Heart right ventricle (tissue), 16 donors: ENCODE measurements at regions of chr3 and their contacts with region 1.

Region 1: DNA sequence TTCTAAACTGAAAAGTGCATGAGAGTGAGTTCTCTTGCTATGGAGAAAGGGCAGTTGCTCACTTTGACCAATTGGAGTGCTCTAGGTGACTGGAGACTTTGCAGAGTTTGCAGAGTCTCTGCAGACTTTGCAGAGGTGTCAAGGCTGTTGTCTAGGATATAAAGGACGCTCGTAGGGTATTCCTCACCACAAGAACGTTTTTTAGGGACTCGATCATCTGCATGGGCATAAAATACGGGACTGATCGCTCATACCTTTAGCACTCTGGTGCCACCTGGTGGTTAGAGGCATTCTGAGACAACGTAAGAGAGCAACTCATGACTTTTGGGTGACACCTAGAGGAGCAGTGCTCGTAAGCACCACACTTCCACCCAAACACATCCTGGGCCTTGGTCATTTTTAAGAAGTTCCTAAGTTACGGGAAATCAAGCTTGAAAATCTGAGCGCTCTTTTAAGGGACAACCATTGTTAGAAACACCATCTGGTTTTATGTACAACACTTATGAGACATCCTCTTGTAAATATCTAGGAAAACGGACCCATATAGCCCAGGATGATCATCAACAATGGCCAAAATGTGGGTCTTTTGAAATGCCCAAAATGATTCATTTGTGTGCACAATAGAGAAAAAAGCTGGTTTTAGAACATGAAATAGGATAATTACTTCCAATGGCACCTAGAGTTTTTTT is 51.6 kb upstream of the XCR1 start:
- DNase-seq: peak; percentile 42 to 90
- ATAC-seq: peak; percentile 93 to 97 (median 95)
- H3K4me3 ChIP-seq: peak overlapping the region in 3 of 10 donors; percentile 23 to 28 (median 27)
- H3K27ac ChIP-seq: no peak overlapping the region
- H3K4me1 ChIP-seq: peaks cover 0 to 12% (median 0%) of the 10 kb centered on the region in 9 donors
- H3K27me3 ChIP-seq: no peaks in the 10 kb centered on the region
- CTCF ChIP-seq: peak; percentile 82 to 100 (median 98)

Region 2: DNA sequence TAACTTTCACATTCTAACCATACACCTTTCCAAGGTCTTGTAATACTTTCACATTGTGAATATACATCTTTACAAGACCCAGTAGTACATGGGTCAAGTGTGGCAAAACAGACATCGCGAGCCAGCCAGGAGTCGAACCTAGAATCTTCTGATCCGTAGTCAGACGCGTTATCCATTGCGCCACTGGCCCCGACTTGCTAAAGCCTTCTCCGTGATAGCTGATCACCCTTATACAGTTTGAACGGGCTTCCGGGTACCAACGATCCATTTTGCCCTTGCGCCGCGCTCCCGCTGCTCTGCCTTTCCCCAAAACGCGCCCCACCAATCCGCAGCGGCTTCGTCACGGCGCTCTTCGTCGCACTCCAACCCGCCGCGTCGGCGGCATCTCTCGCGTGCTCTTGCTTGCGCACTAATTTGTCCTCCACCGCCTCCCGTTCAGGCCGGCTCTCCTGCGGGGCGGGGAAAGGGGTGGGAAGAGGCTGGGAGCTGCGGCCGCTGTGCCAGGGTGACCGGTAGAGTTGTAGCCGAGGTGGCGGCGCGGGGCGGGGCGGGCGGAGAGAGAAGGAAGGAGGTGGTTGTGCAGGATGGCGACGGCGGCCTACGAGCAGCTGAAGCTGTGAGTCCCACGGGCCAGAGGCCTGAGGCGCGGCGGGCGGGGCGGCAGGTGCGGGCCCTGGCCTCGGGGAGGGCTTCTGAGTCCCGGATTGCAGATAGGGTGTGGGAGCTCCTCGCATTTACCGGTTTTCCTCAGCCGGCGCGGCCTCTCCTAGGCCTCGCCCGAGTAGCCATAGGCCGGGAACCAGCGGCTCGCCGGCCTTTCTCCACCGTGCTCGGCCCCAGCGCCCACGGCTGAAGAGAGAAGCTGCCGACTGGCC is 389.7 kb before region 1 on chr3 and contains the start of gene SACM1L:
- intact Hi-C with region 1: no loop called
- DNase-seq: peak; percentile 98 to 99
- ATAC-seq: peak; percentile 96 to 98 (median 98)
- H3K4me3 ChIP-seq: peak within 1 kb of the TSS; percentile 61 to 93 (median 82)
- H3K27ac ChIP-seq: peak within 1 kb of the TSS; percentile 23 to 96 (median 92)
- H3K4me1 ChIP-seq: peaks cover 3 to 69% (median 51%) of the 10 kb centered on the region in 9 donors
- H3K27me3 ChIP-seq: no peaks in the 10 kb centered on the region
- CTCF ChIP-seq: no peak
- total RNA-seq, gene SACM1L: 22.2 to 28.7 (median 23.6) TPM

Region 3: GRCh38 chr3:45841757-45842491 is 236.9 kb before region 1 on chr3 and contains the start of gene LZTFL1:
- intact Hi-C with region 1: loop called in 2 of 10 experiments (anchors 10 kb)
- DNase-seq: peak; percentile 83 to 95
- ATAC-seq: peak; percentile 97 to 99 (median 98)
- H3K4me3 ChIP-seq: peak within 1 kb of the TSS; percentile 78 to 98 (median 85)
- H3K27ac ChIP-seq: peak within 1 kb of the TSS in 7 of 10 donors; percentile 49 to 67 (median 51)
- H3K4me1 ChIP-seq: peaks cover 0 to 16% (median 12%) of the 10 kb centered on the region in 9 donors
- H3K27me3 ChIP-seq: no peaks in the 10 kb centered on the region
- CTCF ChIP-seq: no peak
- total RNA-seq, gene LZTFL1: 6.0 to 12.2 (median 8.7) TPM

Region 4: GRCh38 chr3:45938864-45939263 is 140.0 kb before region 1 on chr3:
- intact Hi-C with region 1: loop called (anchors 1 to 5 kb)
- DNase-seq: peak; percentile 59 to 82
- ATAC-seq: peak; percentile 72 to 89 (median 84)
- H3K4me3 ChIP-seq: no peak overlapping the region
- H3K27ac ChIP-seq: no peak overlapping the region
- H3K4me1 ChIP-seq: peaks cover 2 to 44% (median 24%) of the 10 kb centered on the region in 9 donors
- H3K27me3 ChIP-seq: no peaks in the 10 kb centered on the region
- CTCF ChIP-seq: peak; percentile 74 to 93 (median 89)

Region 5: GRCh38 chr3:46110701-46111493 is 32.0 kb after region 1 on chr3:
- intact Hi-C with region 1: loop called in 1 of 10 experiments (anchors 1 kb)
- DNase-seq: no peak
- ATAC-seq: peak in 7 of 8 donors; percentile 56 to 83 (median 69)
- H3K4me3 ChIP-seq: no peak overlapping the region
- H3K27ac ChIP-seq: peak overlapping the region in 3 of 10 donors; percentile 17 to 89 (median 41)
- H3K4me1 ChIP-seq: peaks cover 0 to 73% (median 0%) of the 10 kb centered on the region in 9 donors
- H3K27me3 ChIP-seq: peaks cover 0 to 11% (median 0%) of the 10 kb centered on the region in 7 donors
- CTCF ChIP-seq: no peak

Region 6: DNA sequence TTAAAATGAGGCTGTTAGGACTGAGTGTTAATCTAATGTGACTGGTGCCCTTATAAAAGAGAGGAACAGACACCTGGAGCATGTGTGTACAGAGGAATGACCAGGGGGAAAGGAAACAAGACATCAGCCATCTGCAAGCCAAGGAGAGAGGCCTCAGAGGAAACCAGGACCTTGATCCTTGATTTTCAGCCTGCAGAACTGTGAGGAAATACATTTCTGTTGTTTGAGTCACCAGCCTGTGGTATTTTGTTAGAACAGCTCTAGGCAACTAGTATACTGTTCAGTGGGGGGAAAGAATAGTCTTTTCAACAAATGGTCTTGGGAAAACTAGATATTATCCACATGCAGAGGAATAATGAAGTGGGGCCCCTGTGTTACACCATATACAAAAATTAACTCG is 48.6 kb after region 1 on chr3:
- intact Hi-C with region 1: no loop called
- DNase-seq: no peak
- ATAC-seq: peak in 1 of 8 donors; percentile 59
- H3K4me3 ChIP-seq: no peak overlapping the region
- H3K27ac ChIP-seq: peak overlapping the region in 1 of 10 donors; percentile 70
- H3K4me1 ChIP-seq: peaks cover 0 to 69% (median 0%) of the 10 kb centered on the region in 9 donors
- H3K27me3 ChIP-seq: peaks cover 0 to 9% (median 0%) of the 10 kb centered on the region in 7 donors
- CTCF ChIP-seq: no peak

Region 7: GRCh38 chr3:46455231-46456095 is 376.6 kb after region 1 on chr3:
- intact Hi-C with region 1: no loop called
- DNase-seq: no peak
- ATAC-seq: peak in 1 of 8 donors; percentile 60
- H3K4me3 ChIP-seq: no peak overlapping the region
- H3K27ac ChIP-seq: no peak overlapping the region
- H3K4me1 ChIP-seq: peaks cover 0 to 2% (median 0%) of the 10 kb centered on the region in 9 donors
- H3K27me3 ChIP-seq: peaks cover 0 to 8% (median 0%) of the 10 kb centered on the region in 7 donors
- CTCF ChIP-seq: no peak

Region 8: GRCh38 chr3:46866720-46867549 is 788.1 kb after region 1 on chr3:
- intact Hi-C with region 1: no loop called
- DNase-seq: peak; percentile 90 to 94
- ATAC-seq: peak; percentile 4 to 62 (median 32)
- H3K4me3 ChIP-seq: peak overlapping the region in 1 of 10 donors; percentile 22
- H3K27ac ChIP-seq: peak overlapping the region; percentile 65 to 98 (median 90)
- H3K4me1 ChIP-seq: peaks cover 23 to 75% (median 48%) of the 10 kb centered on the region in 9 donors
- H3K27me3 ChIP-seq: no peaks in the 10 kb centered on the region
- CTCF ChIP-seq: peak; percentile 87 to 94 (median 91)